ENCODE measurements at regions of chr11 and their contacts with region 1.

Region 1: DNA sequence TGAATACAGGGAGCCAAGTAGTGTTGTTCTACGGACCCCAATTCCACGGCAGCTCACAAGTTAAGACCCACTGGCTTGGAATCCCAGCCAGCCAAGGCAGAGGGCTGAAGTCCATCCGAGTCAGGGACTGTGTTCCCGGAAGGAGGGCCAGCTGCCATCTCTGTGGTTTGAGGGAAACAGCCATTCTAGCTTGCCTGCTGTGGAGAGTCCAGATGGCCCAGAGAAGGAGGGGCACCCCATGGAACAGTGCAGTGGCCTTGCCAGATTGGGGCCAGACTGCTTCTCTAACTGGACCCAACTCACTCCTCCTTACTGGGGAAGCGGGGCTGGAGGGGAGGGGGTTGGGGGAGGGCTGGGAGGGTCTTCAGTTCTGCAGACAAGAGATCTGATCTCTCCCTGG is 156.4 kb downstream of the FAM181B start:
- DNase-seq: no peak
- ATAC-seq: no peak

Region 2: DNA sequence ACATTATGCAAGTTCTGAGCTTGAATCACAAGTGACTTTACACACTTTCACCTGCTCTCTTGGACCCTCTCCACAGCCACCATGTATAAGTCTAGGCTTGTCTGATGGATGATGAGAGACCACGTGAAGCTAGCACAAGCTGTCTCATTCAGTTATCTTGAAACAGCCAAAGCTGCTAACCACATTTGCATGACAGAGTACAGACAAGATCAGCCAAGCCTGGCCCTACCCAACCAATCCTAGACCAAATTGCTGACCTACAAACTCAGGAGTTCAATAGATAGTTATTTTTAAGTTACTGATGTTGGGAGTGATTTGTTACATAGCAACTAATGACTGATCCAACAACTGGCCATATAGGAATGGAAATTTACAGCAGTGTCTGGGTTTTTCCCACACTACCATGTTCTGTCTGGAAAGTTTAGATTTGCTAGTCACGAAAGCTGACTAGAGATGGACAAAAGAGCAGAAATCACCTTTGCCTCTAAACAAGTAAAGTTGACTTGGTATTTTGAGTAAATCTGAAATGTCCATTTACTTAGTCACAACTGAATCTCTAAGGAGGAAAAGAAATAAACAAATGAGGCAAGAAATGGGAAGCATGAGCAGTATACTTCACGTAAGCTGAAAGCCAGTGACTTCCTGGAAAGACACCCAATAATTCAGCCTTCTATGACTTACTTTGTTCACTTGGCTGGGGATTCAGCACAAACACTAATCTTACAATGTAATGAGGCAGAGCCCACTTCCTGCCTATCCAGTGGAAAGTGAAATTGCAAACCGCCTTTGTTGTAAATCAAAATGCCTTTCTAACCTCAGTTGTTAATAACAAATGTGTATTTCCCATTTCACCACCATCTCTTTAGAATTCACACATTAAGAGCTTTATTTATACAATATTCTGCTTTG is 54.7 kb after region 1 on chr11:
- intact Hi-C with region 1: loop called (anchors 5 kb)
- DNase-seq: no peak
- ATAC-seq: no peak

Measured in Right ventricle myocardium superior (tissue), 1 donor.